ENCODE measurements at regions of chr3 and their contacts with region 1.

Region 1: DNA sequence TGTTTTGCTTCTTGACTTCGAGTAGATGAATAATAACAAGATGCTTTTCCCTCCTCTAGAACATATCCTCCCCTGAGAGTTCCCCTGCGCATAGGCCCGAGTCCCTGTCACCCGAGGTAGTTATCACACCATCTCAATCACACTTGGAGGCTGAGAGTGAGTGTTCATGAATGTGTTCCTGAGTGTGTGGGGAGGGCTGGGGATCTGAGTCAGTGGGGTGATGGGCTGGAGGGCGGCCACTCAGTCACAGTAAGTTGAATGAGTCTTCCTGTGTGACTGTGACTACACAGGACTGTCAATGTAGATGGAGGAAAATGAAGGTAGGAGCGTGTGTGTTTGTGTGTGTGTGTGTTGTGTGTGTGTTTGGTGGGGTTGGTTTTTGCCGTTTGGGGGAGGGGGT is 71.0 kb downstream of the SETD5 start:
- DNase-seq: no peak
- H3K4me3 ChIP-seq: no peak overlapping the region
- H3K27ac ChIP-seq: no peak overlapping the region
- H3K4me1 ChIP-seq: no peaks in the 10 kb centered on the region
- H3K27me3 ChIP-seq: no peaks in the 10 kb centered on the region
- CTCF ChIP-seq: no peak

Region 2: DNA sequence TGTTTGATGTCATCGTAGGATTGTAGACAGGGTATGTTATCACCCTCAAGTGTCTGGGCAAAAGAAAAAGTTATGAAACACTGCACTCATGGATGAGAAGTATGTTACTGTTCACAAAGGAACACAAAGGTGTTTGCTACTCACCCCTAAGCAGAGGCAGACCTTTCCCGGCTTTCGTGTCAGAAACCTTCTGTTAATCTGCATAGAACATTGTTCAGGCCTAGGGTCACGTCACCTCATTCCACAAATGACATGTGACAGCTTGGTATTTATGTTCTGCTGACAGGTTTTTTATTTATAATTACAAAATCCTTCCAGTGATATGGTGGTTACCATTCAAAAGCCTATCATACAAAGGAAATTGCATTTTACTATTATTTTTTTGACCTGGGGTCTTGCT is 89.1 kb before region 1 on chr3:
- CTCF ChIA-PET with region 1: no interaction called
- dilution Hi-C with region 1: loop called (anchors 5 kb)
- in situ Hi-C with region 1: no loop called
- intact Hi-C with region 1: no loop called
- DNase-seq: no peak
- H3K4me3 ChIP-seq: no peak overlapping the region
- H3K27ac ChIP-seq: no peak overlapping the region
- H3K4me1 ChIP-seq: no peaks in the 10 kb centered on the region
- H3K27me3 ChIP-seq: no peaks in the 10 kb centered on the region
- CTCF ChIP-seq: no peak

Region 3: GRCh38 chr3:9455596-9456131 is 12.8 kb before region 1 on chr3:
- CTCF ChIA-PET with region 1: no interaction called
- dilution Hi-C with region 1: no loop called
- in situ Hi-C with region 1: no loop called
- intact Hi-C with region 1: loop called (anchors 2 kb)
- DNase-seq: no peak
- H3K4me3 ChIP-seq: no peak overlapping the region
- H3K27ac ChIP-seq: no peak overlapping the region
- H3K4me1 ChIP-seq: no peaks in the 10 kb centered on the region
- H3K27me3 ChIP-seq: no peaks in the 10 kb centered on the region
- CTCF ChIP-seq: no peak

Region 4: GRCh38 chr3:9669720-9670432 is 201.4 kb after region 1 on chr3:
- CTCF ChIA-PET with region 1: no interaction called
- dilution Hi-C with region 1: loop called (anchors 5 kb)
- in situ Hi-C with region 1: no loop called
- intact Hi-C with region 1: no loop called
- DNase-seq: no peak
- H3K4me3 ChIP-seq: no peak overlapping the region
- H3K27ac ChIP-seq: no peak overlapping the region
- H3K4me1 ChIP-seq: no peaks in the 10 kb centered on the region
- H3K27me3 ChIP-seq: no peaks in the 10 kb centered on the region
- CTCF ChIP-seq: no peak